ENCODE measurements at regions of chr2 and their contacts with region 1.

Region 1: GRCh38 chr2:112685271-112685884 is 35.4 kb upstream of the NT5DC4 start:
- DNase-seq: peak; percentile 19
- H3K4me3 ChIP-seq: no peak overlapping the region
- H3K27ac ChIP-seq: no peak overlapping the region
- H3K4me1 ChIP-seq: peaks cover 35% of the 10 kb centered on the region
- CTCF ChIP-seq: 0 out of 2 replicates have a peak, but pooled peaks have one; percentile 34

Region 2: GRCh38 chr2:112465382-112465781 is 220.0 kb before region 1 on chr2:
- CTCF ChIA-PET with region 1: no interaction called
- POLR2A ChIA-PET with region 1: no interaction called
- intact Hi-C with region 1: no loop called
- DNase-seq: no peak
- H3K4me3 ChIP-seq: no peak overlapping the region
- H3K27ac ChIP-seq: no peak overlapping the region
- H3K4me1 ChIP-seq: no peaks in the 10 kb centered on the region
- CTCF ChIP-seq: no peak

Region 3: GRCh38 chr2:112701052-112701451 is 15.7 kb after region 1 on chr2:
- CTCF ChIA-PET with region 1: no interaction called
- POLR2A ChIA-PET with region 1: interaction called, 15 read pairs
- intact Hi-C with region 1: no loop called
- DNase-seq: no peak
- H3K4me3 ChIP-seq: no peak overlapping the region
- H3K27ac ChIP-seq: no peak overlapping the region
- H3K4me1 ChIP-seq: no peaks in the 10 kb centered on the region
- CTCF ChIP-seq: no peak